H1 (cell line): ENCODE measurements at regions of chr6 and their contacts with region 1.

Region 1: GRCh38 chr6:169420912-169421543 is 167.4 kb upstream of the THBS2 start:
- DNase-seq: no peak
- H3K4me3 ChIP-seq: no peak overlapping the region
- H3K27ac ChIP-seq: no peak overlapping the region
- H3K4me1 ChIP-seq: no peaks in the 10 kb centered on the region
- H3K27me3 ChIP-seq: no peaks in the 10 kb centered on the region
- CTCF ChIP-seq: peak; percentile 32 to 54 (median 45); a peak in 3 of 4 replicates
- EP300 ChIP-seq: no peak
- POLR2A ChIP-seq: no peak
- RAD21 ChIP-seq: peak; percentile 12 to 49; a peak in 3 of 4 replicates

Region 2: GRCh38 chr6:169386411-169387057 is 34.5 kb before region 1 on chr6:
- CTCF ChIA-PET with region 1: no interaction called
- POLR2A ChIA-PET with region 1: no interaction called
- DNase-seq: no peak
- H3K4me3 ChIP-seq: no peak overlapping the region
- H3K27ac ChIP-seq: no peak overlapping the region
- H3K4me1 ChIP-seq: no peaks in the 10 kb centered on the region
- H3K27me3 ChIP-seq: no peaks in the 10 kb centered on the region
- CTCF ChIP-seq: no peak
- EP300 ChIP-seq: no peak
- POLR2A ChIP-seq: no peak
- RAD21 ChIP-seq: no peak

Region 3: GRCh38 chr6:169409742-169410312 is 11.2 kb before region 1 on chr6:
- CTCF ChIA-PET with region 1: interaction called, 10 read pairs
- POLR2A ChIA-PET with region 1: no interaction called
- DNase-seq: no peak
- H3K4me3 ChIP-seq: no peak overlapping the region
- H3K27ac ChIP-seq: no peak overlapping the region
- H3K4me1 ChIP-seq: no peaks in the 10 kb centered on the region
- H3K27me3 ChIP-seq: no peaks in the 10 kb centered on the region
- CTCF ChIP-seq: no peak
- EP300 ChIP-seq: no peak
- POLR2A ChIP-seq: no peak
- RAD21 ChIP-seq: no peak

Region 4: DNA sequence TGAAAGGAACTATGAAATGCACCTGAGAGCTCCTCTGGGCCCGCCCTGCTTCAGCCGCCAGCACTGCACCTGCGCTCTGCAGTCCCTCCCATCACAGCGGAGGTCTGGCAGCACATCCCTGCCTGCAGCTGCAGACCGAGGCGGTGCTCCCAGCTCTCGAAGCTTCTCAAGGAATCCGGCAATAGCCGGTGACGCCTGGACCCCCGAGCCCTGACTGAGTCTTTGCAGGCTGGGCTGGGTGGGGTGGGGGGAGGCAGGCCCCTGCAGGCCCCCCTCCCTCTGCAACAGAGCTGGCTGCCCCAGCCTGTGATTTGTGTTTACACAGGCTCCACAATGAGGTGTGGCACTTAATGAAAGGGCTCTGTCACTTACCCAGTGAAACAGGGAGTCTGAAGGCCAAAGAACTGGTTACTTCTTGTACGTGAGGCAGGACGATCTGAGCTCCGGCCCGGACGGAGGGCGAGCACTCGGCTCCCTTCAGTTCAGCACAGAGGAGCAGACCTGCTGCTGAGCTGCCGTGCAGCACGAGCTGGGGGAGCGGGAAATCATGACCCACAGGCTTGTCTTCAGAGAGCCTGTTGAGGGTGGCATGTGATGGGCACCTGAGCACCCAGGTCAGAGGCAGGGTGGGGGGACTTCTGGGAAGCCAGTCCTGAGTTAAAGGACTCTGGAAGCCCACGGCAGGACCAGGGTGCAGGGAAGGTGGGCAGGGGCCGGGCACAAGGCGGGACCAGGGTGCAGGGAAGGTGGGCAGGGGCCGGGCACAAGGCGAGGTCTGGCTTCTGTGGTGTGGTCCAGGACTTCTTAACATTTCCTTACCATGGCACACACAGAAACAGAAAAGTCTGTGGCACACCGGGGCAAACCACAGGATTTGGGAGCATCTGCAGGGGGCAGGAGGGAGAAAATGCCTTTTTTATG is 24.9 kb after region 1 on chr6:
- CTCF ChIA-PET with region 1: interaction called, 10 read pairs
- POLR2A ChIA-PET with region 1: interaction called, 3 read pairs
- DNase-seq: no peak
- H3K4me3 ChIP-seq: no peak overlapping the region
- H3K27ac ChIP-seq: no peak overlapping the region
- H3K4me1 ChIP-seq: peaks cover 0 to 4% (median 1%) of the 10 kb centered on the region in 4 experiments; a peak in 1 of 7 replicates
- H3K27me3 ChIP-seq: no peaks in the 10 kb centered on the region
- CTCF ChIP-seq: no peak
- EP300 ChIP-seq: no peak
- POLR2A ChIP-seq: no peak
- RAD21 ChIP-seq: no peak